ENCODE measurements at regions of chr6 and their contacts with region 1.

Region 1: GRCh38 chr6:158793432-158793831 is 25.7 kb downstream of the EZR start:
- DNase-seq: no peak
- ATAC-seq: peak; percentile 56
- H3K4me3 Mint-ChIP-seq: no peak overlapping the region
- H3K27ac Mint-ChIP-seq: peak overlapping the region; percentile 32
- H3K4me1 Mint-ChIP-seq: peaks cover 84% of the 10 kb centered on the region
- H3K27me3 Mint-ChIP-seq: no peaks in the 10 kb centered on the region

Region 2: DNA sequence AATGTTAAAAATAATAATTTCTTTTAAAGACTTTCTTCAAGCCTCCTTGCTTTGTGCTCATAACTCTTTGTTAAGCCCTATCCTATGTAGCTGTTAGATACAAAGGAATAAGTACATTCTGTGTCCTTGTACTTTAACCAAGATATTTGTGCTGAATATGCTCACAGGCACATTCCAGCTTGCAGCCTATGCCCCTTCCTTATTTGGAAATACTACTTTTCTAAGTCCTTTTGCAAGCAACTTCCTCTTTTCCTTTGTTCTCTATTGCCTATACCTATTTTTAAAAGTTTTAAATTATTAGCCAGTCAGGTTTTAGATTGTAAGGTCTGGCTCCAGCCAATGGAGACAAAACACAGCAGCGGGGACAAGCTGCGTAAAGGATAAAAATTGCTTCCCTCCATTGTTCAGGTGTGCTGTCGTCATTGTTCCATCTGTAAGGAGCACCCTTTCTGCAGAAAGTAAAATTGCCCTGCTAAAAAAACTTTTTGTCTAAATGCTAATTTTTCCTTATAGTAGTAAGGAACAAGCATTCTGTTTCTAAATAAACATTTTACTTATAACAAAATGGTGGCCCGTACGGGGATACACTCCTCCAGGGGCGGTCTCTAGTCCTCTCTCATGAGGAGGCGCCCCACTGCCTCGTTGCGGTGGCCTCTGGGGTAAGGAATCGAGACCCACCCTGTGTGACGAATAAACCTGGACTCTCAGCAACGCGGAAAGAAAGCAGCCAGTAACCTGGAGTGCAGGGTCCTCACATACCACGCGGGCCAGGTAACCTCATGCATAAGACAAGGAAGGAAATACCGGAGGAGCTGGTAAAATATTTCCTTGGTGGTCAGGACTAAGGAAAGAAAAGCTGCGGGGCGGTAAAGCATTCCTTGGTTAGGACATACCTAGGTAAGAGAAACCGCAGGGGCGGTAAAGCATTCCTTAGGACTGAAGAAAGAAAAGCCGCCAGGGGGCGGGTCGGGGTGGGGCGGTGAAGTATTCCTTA is 63.2 kb before region 1 on chr6:
- CTCF ChIA-PET with region 1: no interaction called
- DNase-seq: no peak
- ATAC-seq: no peak
- H3K4me3 Mint-ChIP-seq: no peak overlapping the region
- H3K27ac Mint-ChIP-seq: no peak overlapping the region
- H3K4me1 Mint-ChIP-seq: peaks cover 9% of the 10 kb centered on the region
- H3K27me3 Mint-ChIP-seq: no peaks in the 10 kb centered on the region

Region 3: GRCh38 chr6:158869826-158870648 is 76.6 kb after region 1 on chr6:
- CTCF ChIA-PET with region 1: interaction called, 10 read pairs
- DNase-seq: peak; percentile 98
- ATAC-seq: peak; percentile 92
- H3K4me3 Mint-ChIP-seq: peak overlapping the region; percentile 81
- H3K27ac Mint-ChIP-seq: peak overlapping the region; percentile 99
- H3K4me1 Mint-ChIP-seq: peaks cover 35% of the 10 kb centered on the region
- H3K27me3 Mint-ChIP-seq: peaks cover 12% of the 10 kb centered on the region

Region 4: DNA sequence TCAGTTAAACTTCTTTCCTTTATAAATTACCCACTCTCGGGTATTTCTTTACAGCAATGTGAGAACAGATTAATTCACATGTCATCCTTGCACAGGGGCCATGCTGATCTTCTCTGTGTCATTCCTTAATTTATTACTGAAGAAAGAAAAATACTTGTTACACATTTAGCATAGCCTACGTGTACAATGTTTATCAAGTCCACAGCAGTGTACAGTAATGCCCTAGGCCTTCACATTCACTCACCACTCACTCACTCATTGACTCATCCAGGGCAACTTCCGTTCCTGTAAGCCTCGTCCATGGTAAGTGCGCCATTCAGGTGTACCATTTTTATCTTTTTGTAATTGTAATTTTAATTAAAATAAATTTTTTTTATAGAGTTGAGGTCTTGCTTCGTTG is 133.0 kb after region 1 on chr6:
- CTCF ChIA-PET with region 1: no interaction called
- DNase-seq: no peak
- ATAC-seq: no peak
- H3K4me3 Mint-ChIP-seq: no peak overlapping the region
- H3K27ac Mint-ChIP-seq: no peak overlapping the region
- H3K4me1 Mint-ChIP-seq: no peaks in the 10 kb centered on the region
- H3K27me3 Mint-ChIP-seq: no peaks in the 10 kb centered on the region